Ascending aorta (tissue), 2 donors: ENCODE measurements at regions of chr1 and their contacts with region 1.

Region 1: GRCh38 chr1:114346480-114347029 is 164.4 kb downstream of the TRIM33 start:
- DNase-seq: peak; percentile 74 to 98
- H3K4me3 ChIP-seq: peak overlapping the region; percentile 69 to 78
- H3K27ac ChIP-seq: peak overlapping the region; percentile 88 to 94
- H3K4me1 ChIP-seq: peaks cover 6 to 8% of the 10 kb centered on the region in 2 donors
- H3K27me3 ChIP-seq: no peaks in the 10 kb centered on the region
- CTCF ChIP-seq: peak; percentile 100

Region 2: DNA sequence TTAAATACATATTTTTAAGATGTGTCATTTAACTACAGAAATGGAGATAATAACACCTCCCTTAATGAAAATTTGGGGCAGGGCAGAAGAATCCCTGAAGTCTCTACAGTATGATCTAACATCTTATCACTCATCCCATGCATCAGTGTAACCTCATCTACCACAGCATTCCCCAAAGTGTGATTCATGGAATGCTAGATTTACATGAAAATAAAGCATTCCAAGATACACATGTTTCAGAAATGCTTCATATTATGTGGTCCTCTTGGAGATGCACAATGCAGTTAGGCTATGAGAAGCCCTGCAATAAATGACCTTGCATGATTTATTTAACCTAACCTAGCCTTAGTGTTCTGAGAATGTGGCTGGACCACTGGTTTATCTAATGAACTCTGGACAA is 26.0 kb before region 1 on chr1:
- intact Hi-C with region 1: no loop called
- DNase-seq: no peak
- H3K4me3 ChIP-seq: no peak overlapping the region
- H3K27ac ChIP-seq: no peak overlapping the region
- H3K4me1 ChIP-seq: no peaks in the 10 kb centered on the region
- H3K27me3 ChIP-seq: no peaks in the 10 kb centered on the region
- CTCF ChIP-seq: no peak

Region 3: GRCh38 chr1:114402843-114403242 is 56.3 kb after region 1 on chr1:
- intact Hi-C with region 1: no loop called
- DNase-seq: no peak
- H3K4me3 ChIP-seq: no peak overlapping the region
- H3K27ac ChIP-seq: no peak overlapping the region
- H3K4me1 ChIP-seq: no peaks in the 10 kb centered on the region
- H3K27me3 ChIP-seq: no peaks in the 10 kb centered on the region
- CTCF ChIP-seq: no peak

Region 4: DNA sequence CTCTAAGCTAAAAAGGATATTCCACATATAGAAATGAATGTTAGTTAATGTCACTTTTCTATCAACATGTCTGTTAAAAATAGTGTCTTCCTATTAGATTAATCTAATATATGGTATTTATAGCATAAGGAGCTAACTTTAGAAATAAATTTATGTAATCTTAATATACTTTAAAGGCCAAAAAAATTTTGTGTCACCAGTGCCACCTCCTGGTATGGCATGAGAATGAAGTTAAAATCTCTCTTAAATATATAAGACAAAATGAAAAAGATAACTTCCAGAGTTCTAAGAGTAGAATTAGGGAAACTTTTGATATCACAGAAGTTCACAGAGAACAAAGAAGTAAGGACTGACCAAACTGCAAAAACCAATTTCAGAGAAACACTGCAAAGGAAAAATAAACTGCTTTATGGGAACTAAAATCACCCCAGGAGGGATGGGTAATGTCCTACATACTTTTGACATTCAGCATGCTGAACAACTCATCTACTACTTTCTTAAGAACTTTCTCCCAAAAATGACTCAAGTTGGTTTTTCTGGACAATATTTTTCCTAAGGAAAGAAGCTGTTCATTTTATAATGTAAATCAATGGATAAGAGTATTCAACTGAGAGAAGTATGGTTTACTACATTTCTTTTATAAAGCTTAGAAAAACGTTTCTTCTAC is 81.7 kb after region 1 on chr1:
- intact Hi-C with region 1: loop called (anchors 1 kb)
- DNase-seq: no peak
- H3K4me3 ChIP-seq: no peak overlapping the region
- H3K27ac ChIP-seq: no peak overlapping the region
- H3K4me1 ChIP-seq: no peaks in the 10 kb centered on the region
- H3K27me3 ChIP-seq: no peaks in the 10 kb centered on the region
- CTCF ChIP-seq: peak; percentile 10 to 58 (median 36)

Region 5: DNA sequence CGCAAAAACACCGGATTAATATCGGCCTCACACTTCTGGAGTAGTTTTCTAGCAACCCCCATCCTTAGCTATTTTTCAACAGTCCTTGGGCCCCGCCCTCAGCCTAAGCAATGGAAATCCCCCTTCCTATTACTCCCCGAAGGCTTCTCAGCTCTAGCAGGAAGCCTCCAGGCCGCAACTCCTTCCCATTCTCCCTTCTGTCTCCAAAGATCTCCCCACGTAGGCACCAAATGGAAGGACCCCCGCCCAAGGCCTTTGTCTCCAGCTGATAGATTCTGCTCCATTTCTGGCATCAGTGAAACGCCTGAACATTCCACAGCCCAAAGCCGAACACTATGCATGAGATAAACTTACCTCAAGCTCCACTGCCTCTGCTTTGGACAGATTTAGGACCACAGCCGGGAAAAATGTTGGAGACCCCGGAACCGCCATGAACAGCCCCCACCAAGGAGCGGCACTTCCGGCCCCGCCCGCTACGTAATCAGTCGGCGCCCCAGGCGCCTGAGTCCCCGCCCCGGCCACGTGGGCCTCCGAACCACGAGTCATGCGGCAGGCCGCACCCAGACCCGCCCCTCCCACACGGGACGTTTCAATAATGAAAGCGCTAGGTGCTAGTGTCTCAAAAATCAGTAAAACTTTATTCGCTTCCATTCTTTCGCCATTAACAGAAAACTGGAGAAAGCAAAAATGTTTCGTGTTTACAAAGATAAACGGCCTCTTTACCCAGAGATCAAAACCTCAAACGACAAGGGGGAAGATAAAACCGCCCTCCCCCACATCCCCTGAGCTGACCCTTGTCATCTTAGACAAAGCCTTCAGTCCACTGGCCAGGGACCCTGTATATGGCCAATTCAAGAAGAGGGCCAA is 370.0 kb after region 1 on chr1 and contains the start of gene NRAS:
- intact Hi-C with region 1: loop called (anchors 10 kb)
- DNase-seq: peak; percentile 71 to 97
- H3K4me3 ChIP-seq: peak within 1 kb of the TSS; percentile 86 to 99
- H3K27ac ChIP-seq: peak within 1 kb of the TSS; percentile 87 to 95
- H3K4me1 ChIP-seq: peaks cover 3 to 12% of the 10 kb centered on the region in 2 donors
- H3K27me3 ChIP-seq: no peaks in the 10 kb centered on the region
- CTCF ChIP-seq: no peak
- total RNA-seq, gene NRAS: 10.7 TPM